ENCODE measurements at regions of chr16 and their contacts with region 1.

Region 1: GRCh38 chr16:4425378-4426020 is at the start of gene DNAJA3:
- DNase-seq: peak; percentile 98
- H3K4me3 Mint-ChIP-seq: peak within 1 kb of the TSS; percentile 100
- H3K27ac Mint-ChIP-seq: peak within 1 kb of the TSS; percentile 100
- H3K4me1 Mint-ChIP-seq: peaks cover 29% of the 10 kb centered on the region
- H3K27me3 Mint-ChIP-seq: peaks cover 3% of the 10 kb centered on the region
- total RNA-seq, gene DNAJA3: 106 and 108 TPM in 2 replicates

Region 2: GRCh38 chr16:4538350-4539235 is 113.1 kb after region 1 on chr16 and contains the start of gene CDIP1:
- intact Hi-C with region 1: loop called (anchors 5 kb)
- DNase-seq: peak; percentile 97
- H3K4me3 Mint-ChIP-seq: peak within 1 kb of the TSS; percentile 85
- H3K27ac Mint-ChIP-seq: peak within 1 kb of the TSS; percentile 89
- H3K4me1 Mint-ChIP-seq: peaks cover 31% of the 10 kb centered on the region
- H3K27me3 Mint-ChIP-seq: peaks cover 4% of the 10 kb centered on the region
- total RNA-seq, gene CDIP1: 49.4 and 55.2 TPM in 2 replicates

Region 3: DNA sequence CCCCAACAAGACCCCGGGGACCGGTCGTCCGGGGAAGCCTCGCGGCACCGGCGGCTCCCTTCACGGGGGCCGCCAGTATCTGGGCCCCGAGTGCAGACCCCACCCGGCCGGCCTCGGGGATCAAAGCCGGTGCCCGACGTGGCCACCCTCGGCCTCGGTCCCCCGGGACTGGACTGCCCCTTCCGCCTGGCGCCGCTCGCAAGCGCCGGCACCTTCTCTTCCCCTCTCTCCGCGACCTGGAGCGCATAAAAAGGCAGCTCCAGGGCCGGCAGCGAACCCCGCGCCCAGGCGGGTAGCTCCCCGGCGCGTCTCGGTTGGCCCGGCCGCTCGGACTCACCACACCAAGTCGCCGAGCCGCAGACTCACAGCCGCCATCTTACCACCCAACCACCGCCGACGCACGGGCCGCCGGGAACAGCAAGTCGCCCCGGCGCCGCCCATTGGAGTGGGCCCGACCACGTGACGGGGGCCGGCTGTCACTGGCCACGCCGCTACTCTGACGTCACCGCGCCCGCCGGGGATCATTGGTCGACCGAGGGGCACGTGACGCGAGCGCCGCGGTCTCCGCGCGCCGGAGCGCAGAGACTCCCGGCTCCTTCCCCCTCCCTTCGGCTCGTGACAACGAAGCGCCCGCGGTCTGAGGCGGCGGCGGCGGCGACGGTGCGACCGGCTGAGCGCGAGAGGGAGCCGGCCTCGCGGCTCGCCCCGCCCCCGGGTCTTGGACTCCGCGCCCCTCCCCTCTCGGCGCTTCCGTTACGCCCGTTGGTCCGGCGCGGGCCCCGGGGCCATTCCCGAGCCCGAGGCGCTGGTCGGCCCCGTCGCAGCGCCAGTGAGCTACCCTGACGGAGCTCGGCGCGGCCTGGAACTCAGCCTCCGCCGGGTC is 421.6 kb after region 1 on chr16 and contains the starts of genes GLYR1 and UBN1:
- intact Hi-C with region 1: loop called (anchors 2 kb)
- DNase-seq: peak; percentile 100
- H3K4me3 Mint-ChIP-seq: peak within 1 kb of the TSS; percentile 95
- H3K27ac Mint-ChIP-seq: peak within 1 kb of the TSS; percentile 91
- H3K4me1 Mint-ChIP-seq: peaks cover 39% of the 10 kb centered on the region
- H3K27me3 Mint-ChIP-seq: no peaks in the 10 kb centered on the region
- total RNA-seq, gene GLYR1: 109 and 119 TPM in 2 replicates
- total RNA-seq, gene UBN1: 36.5 and 36.9 TPM in 2 replicates

Measured in activated CD4-positive, alpha-beta T cell treated with anti-CD3 and anti-CD28 coated beads, Interleukin-2, amount 10 ng/mL, durations not matched to agents 24 days and 14 days (primary cell).